Activated CD4-positive, alpha-beta T cell treated with anti-CD3 and anti-CD28 coated beads, Interleukin-2, amount 10 ng/mL, durations not matched to agents 24 days and 14 days (primary cell): ENCODE measurements at regions of chrX and their contacts with region 1.

Region 1: DNA sequence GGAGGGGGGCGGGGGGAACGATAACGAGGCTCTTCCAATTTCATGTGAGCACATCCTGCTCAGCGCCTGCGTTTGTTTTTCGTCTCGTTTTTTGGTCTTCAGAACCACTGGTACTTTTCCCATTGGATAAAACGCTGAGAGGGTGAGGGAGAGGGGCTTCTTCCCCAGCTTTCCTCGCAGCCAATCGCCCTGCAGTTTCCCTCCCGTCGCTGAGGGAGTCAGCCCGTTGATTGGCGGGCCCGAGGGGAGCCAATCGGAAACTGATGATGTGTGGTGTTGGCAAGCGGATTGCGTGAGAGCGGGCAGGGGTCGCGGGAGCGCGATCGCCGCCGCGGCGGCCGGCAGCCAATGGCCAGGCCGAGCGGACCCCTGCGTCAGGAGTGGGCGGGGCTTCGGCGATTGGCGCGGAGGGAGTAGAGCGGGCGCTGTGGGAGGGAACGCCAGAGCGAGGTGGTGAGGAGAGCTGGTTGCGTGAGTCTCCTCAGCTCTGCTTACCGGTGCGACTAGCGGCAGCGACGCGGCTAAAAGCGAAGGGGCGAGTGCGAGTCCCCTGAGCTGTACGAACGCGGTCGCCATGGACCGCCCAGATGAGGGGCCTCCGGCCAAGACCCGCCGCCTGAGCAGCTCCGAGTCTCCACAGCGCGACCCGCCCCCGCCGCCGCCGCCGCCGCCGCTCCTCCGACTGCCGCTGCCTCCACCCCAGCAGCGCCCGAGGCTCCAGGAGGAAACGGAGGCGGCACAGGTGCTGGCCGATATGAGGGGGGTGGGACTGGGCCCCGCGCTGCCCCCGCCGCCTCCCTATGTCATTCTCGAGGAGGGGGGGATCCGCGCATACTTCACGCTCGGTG is at the start of gene TSPYL2:
- DNase-seq: peak; percentile 97
- H3K4me3 Mint-ChIP-seq: peak within 1 kb of the TSS; percentile 96
- H3K27ac Mint-ChIP-seq: peak within 1 kb of the TSS; percentile 98
- H3K4me1 Mint-ChIP-seq: peaks cover 31% of the 10 kb centered on the region
- H3K27me3 Mint-ChIP-seq: no peaks in the 10 kb centered on the region
- total RNA-seq, gene TSPYL2: 37.3 and 40.3 TPM in 2 replicates

Region 2: DNA sequence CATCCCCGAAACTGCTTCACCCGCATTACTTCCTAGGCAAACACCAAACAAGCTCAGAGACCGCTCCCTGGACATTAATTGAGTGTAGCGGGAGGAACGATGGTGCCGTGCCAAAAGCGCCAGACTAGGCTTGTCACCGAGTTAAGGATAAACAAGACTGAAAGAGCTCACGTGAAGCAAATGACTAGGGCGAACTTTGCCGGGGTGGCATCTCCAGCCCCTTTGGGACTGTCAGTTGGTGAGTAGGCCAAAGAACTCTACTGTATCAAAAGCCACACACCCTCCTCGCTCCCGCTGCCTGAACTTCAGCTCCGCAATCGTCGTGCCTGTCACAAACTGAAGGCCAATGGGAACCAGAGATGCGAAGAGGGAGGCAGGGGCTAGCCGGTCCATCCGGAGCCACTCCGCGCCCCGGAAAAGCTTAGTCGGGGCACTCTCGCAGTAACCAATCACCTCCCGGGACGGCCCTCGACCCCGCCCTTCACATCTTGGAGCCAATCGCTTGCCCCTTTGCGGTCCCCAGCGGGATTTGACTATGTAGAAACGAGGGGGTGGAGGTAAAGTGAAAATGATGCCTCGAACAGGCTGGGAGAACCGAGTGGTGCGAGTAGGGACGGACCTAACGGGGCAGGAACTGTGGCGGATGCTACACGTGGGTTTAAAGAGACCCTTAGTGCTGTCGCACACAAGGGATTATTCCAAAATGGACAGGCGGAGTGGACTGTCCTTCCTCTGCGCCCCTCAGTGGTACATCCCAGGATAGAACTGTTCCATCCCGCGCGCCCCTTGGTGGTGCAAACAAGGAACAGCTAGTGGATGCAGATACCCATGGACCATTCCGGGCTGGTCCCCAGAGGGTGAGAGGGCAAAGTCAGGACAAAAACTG is 86.8 kb before region 1 on chrX:
- intact Hi-C with region 1: loop called (anchors 5 kb)
- DNase-seq: peak; percentile 97
- H3K4me3 Mint-ChIP-seq: peak overlapping the region; percentile 87
- H3K27ac Mint-ChIP-seq: peak overlapping the region; percentile 99
- H3K4me1 Mint-ChIP-seq: peaks cover 17% of the 10 kb centered on the region
- H3K27me3 Mint-ChIP-seq: no peaks in the 10 kb centered on the region

Region 3: DNA sequence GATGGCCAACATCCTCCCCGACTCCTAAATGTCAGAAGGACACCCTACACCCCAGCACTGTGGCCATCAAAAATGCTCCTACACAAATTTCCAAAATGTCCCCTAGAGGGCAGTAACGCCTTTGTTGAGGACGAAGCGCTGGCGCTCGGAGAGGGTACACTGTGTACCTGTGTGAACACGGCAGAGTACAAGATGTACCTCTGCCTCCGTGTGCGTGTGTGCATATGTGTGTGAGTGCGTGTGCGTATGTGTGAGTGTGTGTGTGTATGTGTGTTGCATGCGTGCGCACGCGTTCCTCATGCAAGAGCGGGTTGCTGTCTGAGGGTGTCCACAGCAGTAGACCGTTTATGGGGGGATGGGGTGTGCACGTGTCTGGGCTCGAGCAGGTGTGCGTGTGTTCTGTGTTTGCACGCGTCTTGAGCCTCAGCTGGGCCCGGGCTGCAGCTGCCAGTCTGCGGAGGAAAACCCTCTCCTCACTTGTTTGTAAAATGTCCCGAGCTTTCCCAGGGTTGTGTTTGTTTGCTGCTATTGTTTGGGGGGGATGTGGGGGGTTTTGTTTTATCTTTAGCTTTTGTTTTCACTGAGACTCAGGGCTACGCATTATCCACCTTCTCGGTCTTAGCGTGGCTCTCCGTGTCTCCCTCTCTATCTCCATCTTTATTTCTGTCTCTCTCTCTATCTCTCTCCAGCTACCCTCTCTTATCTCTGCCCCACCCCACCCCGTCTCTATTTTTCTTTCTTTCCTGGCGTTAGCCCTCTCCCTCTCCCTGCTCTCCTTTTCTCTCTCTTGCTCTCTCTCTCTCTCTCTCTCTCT is 10.3 kb before region 1 on chrX:
- intact Hi-C with region 1: loop called (anchors 1 kb)
- DNase-seq: peak; percentile 89
- H3K4me3 Mint-ChIP-seq: peak overlapping the region; percentile 83
- H3K27ac Mint-ChIP-seq: peak overlapping the region; percentile 70
- H3K4me1 Mint-ChIP-seq: peaks cover 18% of the 10 kb centered on the region
- H3K27me3 Mint-ChIP-seq: peaks cover 3% of the 10 kb centered on the region

Region 4: DNA sequence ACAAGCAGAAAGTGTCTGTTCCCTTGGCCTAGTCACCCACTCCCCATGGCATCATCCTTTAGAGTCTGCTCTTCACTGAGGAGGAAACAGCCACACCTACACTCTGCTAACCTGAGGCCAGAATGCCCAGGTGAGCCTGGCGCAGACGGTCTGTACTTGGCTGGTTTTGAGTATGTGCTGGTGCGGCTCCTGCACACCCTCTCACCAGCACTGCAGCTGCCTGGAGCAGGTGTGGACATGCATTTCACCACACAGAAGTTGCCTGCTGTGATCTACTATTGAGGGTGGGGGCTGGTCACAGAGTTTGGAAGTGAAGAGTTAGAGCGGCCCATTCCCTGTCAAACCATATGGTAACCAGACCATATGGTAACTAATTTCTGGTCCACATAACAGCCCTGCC is 51.3 kb after region 1 on chrX:
- intact Hi-C with region 1: no loop called
- DNase-seq: no peak
- H3K4me3 Mint-ChIP-seq: no peak overlapping the region
- H3K27ac Mint-ChIP-seq: no peak overlapping the region
- H3K4me1 Mint-ChIP-seq: no peaks in the 10 kb centered on the region
- H3K27me3 Mint-ChIP-seq: no peaks in the 10 kb centered on the region

Region 5: DNA sequence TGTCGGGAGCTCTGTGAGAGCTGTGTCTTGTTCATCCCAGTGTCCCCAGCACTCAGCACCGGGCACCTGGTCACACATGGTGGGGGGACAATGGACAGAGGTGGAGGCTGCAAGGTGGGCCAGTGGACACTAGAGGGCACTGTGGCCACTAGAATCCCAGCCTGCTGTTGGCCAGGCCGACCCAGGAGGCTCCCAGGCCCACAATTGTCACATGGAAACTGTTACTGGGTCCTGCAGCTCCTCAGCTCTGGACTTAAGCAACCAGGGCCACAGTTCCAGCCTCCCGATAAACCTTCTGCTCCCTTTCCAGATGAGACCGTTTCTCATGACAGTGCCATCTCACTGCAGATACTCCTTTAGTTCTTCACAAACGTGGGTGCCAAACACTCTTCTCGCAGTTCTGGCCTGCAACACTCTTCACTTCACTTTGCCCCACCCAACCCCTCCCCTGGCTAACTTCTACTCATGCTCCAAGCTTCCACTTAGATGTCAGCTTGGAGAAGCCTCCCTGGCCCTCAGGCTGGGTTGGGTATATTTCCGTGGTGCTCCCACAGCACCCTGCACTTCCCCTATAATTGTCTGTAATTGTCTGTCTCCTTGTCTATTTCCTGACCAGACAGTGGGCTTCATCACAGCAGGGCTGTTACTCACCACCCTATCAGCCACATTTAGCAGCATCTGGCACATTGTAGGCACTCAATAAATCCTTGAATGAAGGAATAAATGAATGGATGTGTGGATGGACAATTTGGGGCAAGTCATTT is 202.7 kb after region 1 on chrX:
- intact Hi-C with region 1: no loop called
- DNase-seq: peak; percentile 83
- H3K4me3 Mint-ChIP-seq: no peak overlapping the region
- H3K27ac Mint-ChIP-seq: no peak overlapping the region
- H3K4me1 Mint-ChIP-seq: peaks cover 14% of the 10 kb centered on the region
- H3K27me3 Mint-ChIP-seq: no peaks in the 10 kb centered on the region